Dorsolateral prefrontal cortex (tissue), 120 donors: ENCODE measurements at regions of chrX and their contacts with region 1.

Region 1: DNA sequence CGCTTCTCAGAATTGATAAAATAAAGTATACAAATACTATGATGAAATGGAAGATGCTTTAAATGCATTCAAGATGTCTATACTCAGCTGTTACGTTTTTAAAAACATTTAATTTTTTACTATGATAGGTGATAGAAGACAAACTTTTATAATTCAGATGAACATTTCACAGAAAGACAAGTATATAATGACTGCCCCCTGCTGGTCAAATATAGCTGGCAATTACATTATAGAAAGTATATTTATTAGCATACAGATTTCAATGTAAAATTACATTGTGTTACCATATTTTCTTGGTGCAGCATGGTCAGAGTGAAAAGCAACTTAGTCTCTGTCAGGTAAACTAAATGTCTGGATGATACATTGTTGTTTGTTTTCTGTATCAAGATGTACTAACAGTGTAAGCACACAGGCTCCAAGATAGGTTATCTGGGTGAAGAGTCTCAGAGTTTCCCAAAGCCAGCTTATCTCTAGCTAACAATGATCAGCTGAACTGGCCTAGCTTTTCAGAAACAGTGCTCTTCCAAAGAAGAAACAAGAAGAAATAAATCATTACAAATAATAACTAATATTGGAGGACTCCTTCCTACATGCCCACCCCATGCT is 54.1 kb downstream of the SRPX start:
- DNase-seq: no peak
- H3K4me3 ChIP-seq: no peak overlapping the region
- H3K27ac ChIP-seq: no peak overlapping the region
- H3K27me3 ChIP-seq: peaks cover 0 to 57% (median 19%) of the 10 kb centered on the region in 45 donors
- CTCF ChIP-seq: peak; percentile 45 to 82 (median 70)

Region 2: DNA sequence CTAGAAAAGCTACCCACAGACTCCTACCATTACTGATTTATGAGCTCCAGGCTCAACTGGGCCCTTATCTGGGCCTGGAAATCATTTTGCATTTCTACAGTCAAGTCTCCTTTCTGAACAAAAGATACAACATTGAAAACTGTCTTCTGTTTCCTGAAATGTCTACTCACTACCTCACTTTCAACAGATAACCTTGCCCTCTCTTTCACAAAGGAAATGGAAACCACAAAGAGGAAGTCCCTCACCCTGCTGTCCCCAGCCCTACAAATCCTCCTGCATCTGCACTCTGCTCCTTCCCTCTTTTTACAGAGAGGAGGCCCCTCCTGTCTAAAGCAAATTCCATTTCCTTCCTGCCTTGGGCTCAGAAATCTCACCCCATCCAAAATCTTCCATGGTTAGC is 411.6 kb before region 1 on chrX:
- intact Hi-C with region 1: no loop called
- DNase-seq: no peak
- H3K4me3 ChIP-seq: no peak overlapping the region
- H3K27ac ChIP-seq: no peak overlapping the region
- H3K27me3 ChIP-seq: peaks cover 0 to 38% (median 9%) of the 10 kb centered on the region in 45 donors
- CTCF ChIP-seq: no peak

Region 3: DNA sequence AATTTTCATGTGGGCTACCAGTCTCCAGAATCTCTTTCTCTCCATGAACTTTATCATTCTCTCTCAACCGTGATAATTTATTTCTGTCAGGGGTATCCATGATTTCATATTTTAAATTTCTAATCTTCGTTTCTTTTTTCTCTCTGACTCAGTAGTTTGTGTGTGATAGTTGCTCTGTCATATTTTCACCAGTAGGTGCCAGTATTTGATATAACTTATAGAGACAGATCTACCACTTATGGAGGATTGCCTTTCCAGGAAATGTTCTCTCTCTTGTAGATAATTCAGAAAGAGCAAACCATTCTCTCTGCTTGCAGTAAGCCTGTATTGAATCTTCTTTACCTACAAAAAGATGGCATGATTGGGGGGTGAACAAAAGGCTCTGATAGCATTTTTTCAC is 239.9 kb before region 1 on chrX:
- intact Hi-C with region 1: loop called in 1 of 2 experiments (anchors 10 kb)
- DNase-seq: no peak
- H3K4me3 ChIP-seq: no peak overlapping the region
- H3K27ac ChIP-seq: no peak overlapping the region
- H3K27me3 ChIP-seq: peaks cover 0 to 82% (median 24%) of the 10 kb centered on the region in 45 donors
- CTCF ChIP-seq: peak in 55 of 56 donors; percentile 19 to 73 (median 49)

Region 4: GRCh38 chrX:38382663-38383062 is 216.1 kb after region 1 on chrX:
- intact Hi-C with region 1: no loop called
- DNase-seq: peak in 1 of 10 donors; percentile 30
- H3K4me3 ChIP-seq: no peak overlapping the region
- H3K27ac ChIP-seq: no peak overlapping the region
- H3K27me3 ChIP-seq: peaks cover 0 to 56% (median 11%) of the 10 kb centered on the region in 45 donors
- CTCF ChIP-seq: no peak